ENCODE measurements at regions of chr7 and their contacts with region 1.

Region 1: GRCh38 chr7:133434055-133434865 is 181.4 kb downstream of the EXOC4 start:
- DNase-seq: no peak
- H3K4me3 ChIP-seq: no peak overlapping the region
- H3K27ac ChIP-seq: no peak overlapping the region
- H3K4me1 ChIP-seq: no peaks in the 10 kb centered on the region
- H3K27me3 ChIP-seq: no peaks in the 10 kb centered on the region
- CTCF ChIP-seq: peak in 1 of 4 experiments; percentile 25
- POLR2A ChIP-seq: no peak

Region 2: DNA sequence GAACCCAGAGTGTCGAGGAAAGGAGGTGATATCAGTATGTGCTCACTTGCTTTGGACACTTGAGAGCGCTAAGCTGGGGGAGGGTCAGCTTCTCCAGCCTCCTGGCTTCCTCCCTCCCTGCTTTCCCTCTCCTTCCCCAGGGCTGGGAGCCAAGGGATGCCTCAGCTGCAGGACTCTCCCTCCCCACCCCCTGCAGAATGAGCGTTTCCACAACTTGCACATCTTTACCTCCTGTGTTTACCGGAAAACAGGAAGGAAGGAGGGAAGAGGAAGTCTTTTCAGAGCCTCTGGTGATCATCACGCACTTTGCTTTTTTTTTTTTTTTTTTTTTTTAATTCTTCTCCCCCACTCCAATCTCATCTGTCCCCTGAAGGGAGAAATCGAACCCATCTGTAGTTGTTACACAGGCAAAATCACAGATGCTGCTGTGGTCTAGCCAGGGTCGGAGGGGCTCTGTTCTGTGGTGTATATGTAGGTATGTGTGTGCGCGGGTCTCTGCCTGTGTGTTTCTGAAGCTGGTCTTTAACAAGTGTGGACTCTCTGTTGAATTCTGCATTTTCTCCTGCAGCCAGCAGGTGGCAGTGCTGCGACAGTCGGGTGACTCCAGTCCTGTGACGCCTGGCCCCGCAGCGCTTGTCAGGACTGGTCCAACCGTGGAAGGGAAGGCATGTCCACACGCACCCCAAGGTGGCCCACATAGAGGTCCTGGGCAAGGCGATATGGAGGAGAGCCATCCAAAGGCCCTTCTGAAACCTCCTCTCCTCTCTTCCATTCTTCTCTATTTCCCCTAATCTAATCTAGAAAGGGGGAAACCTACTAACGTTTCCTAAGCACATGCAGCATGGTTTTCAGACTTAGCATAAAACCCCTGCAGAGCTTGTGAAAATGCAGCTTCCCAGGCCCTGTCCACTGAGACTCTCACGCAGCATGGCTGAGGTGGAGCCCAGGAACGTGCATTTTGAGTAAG is 1115.6 kb before region 1 on chr7:
- intact Hi-C with region 1: loop called (anchors 10 kb)
- DNase-seq: peak; percentile 82
- H3K4me3 ChIP-seq: no peak overlapping the region
- H3K27ac ChIP-seq: no peak overlapping the region
- H3K4me1 ChIP-seq: peaks cover 3% of the 10 kb centered on the region
- H3K27me3 ChIP-seq: no peaks in the 10 kb centered on the region
- CTCF ChIP-seq: peak; percentile 88 to 90 (median 90)
- POLR2A ChIP-seq: no peak

Region 3: GRCh38 chr7:133191787-133192186 is 242.5 kb before region 1 on chr7:
- intact Hi-C with region 1: no loop called
- DNase-seq: no peak
- H3K4me3 ChIP-seq: no peak overlapping the region
- H3K27ac ChIP-seq: no peak overlapping the region
- H3K4me1 ChIP-seq: no peaks in the 10 kb centered on the region
- H3K27me3 ChIP-seq: no peaks in the 10 kb centered on the region
- CTCF ChIP-seq: no peak
- POLR2A ChIP-seq: no peak

Region 4: GRCh38 chr7:133461421-133461820 is 27.2 kb after region 1 on chr7:
- intact Hi-C with region 1: loop called (anchors 2 kb)
- DNase-seq: no peak
- H3K4me3 ChIP-seq: no peak overlapping the region
- H3K27ac ChIP-seq: no peak overlapping the region
- H3K4me1 ChIP-seq: no peaks in the 10 kb centered on the region
- H3K27me3 ChIP-seq: no peaks in the 10 kb centered on the region
- CTCF ChIP-seq: no peak
- POLR2A ChIP-seq: no peak

Measured in prostate gland (tissue), 2 donors.